Activated naive CD4-positive, alpha-beta T cell treated with anti-CD3 and anti-CD28 coated beads, Interleukin-2, amount 10 ng/mL, durations not matched to agents 7 days and 5 days (primary cell): ENCODE measurements at regions of chr11 and their contacts with region 1.

Region 1: DNA sequence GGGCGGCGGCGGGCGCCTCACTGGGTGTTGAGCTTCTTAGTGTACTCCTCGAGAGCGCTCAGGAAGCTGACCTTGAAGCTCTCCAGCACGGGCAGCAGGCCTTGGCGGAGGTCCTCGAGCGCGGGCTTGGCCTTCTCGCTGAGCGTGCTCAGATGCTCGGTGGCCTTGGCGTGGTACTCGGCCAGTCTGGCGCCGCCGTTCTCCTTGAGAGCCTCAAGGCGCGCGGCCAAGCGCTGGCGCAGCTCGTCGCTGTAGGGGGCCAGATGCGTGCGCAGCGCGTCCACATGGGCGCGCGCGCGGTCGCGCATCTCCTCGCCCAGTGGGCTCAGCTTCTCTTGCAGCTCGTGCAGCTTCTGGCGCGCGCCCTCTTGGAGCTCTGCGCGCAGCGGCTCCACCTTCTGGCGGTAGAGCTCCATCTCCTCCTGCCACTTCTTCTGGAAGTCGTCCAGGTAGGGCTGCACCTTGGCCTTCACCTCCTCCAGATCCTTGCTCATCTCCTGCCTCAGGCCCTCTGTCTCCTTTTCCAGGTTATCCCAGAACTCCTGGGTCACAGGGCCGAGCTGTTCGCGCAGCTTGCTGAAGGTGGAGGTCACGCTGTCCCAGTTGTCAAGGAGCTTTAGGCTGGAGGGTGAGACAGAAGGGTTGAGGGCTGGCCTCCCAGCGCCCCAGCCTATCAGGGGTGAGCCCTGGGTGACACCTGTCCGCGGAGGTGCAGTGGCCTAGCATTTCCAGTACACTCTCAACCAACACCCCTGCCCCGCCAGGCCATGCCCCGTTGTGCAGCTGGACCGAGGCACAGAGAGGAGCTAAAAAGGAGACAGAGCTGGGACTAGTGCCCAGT is 1.4 kb downstream of the APOA1 start:
- DNase-seq: peak; percentile 89
- H3K4me3 Mint-ChIP-seq: peak overlapping the region; percentile 67
- H3K27ac Mint-ChIP-seq: peak overlapping the region; percentile 74
- H3K4me1 Mint-ChIP-seq: peaks cover 20% of the 10 kb centered on the region
- H3K27me3 Mint-ChIP-seq: peaks cover 34% of the 10 kb centered on the region

Region 2: DNA sequence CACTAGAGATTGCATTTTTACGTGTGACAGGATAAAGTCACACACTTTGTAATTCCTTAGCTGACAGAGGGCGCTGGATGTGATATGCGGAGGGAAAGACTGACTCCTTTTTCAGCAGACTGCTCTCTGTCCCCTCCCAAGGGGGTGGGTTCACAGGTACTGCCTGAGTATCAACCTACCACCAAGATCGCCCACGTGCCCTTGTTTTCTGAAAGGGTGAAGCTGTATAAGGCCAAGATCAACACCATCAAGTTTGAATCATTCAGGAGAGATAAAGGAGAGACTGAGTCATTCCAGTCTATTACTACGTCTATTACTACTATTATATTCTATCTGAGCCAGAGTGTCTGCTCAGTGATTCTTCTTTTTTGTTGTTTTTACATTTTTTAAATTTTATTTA is 93.9 kb before region 1 on chr11:
- CTCF ChIA-PET with region 1: interaction called, 10 read pairs
- DNase-seq: no peak
- H3K4me3 Mint-ChIP-seq: no peak overlapping the region
- H3K27ac Mint-ChIP-seq: no peak overlapping the region
- H3K4me1 Mint-ChIP-seq: no peaks in the 10 kb centered on the region
- H3K27me3 Mint-ChIP-seq: no peaks in the 10 kb centered on the region

Region 3: GRCh38 chr11:116787786-116788486 is 48.1 kb before region 1 on chr11 and contains the start of gene ZPR1:
- CTCF ChIA-PET with region 1: interaction called, 139 read pairs
- DNase-seq: peak; percentile 92
- H3K4me3 Mint-ChIP-seq: peak within 1 kb of the TSS; percentile 94
- H3K27ac Mint-ChIP-seq: peak within 1 kb of the TSS; percentile 89
- H3K4me1 Mint-ChIP-seq: peaks cover 42% of the 10 kb centered on the region
- H3K27me3 Mint-ChIP-seq: peaks cover 39% of the 10 kb centered on the region

Region 4: GRCh38 chr11:116823031-116823843 is 12.8 kb before region 1 on chr11 and contains the start of gene APOA4:
- CTCF ChIA-PET with region 1: interaction called, 11 read pairs
- DNase-seq: no peak
- H3K4me3 Mint-ChIP-seq: no peak within 1 kb of the TSS
- H3K27ac Mint-ChIP-seq: no peak within 1 kb of the TSS
- H3K4me1 Mint-ChIP-seq: no peaks in the 10 kb centered on the region
- H3K27me3 Mint-ChIP-seq: no peaks in the 10 kb centered on the region

Region 5: GRCh38 chr11:117107701-117108590 is 271.9 kb after region 1 on chr11:
- CTCF ChIA-PET with region 1: interaction called, 35 read pairs
- DNase-seq: no peak
- H3K4me3 Mint-ChIP-seq: no peak overlapping the region
- H3K27ac Mint-ChIP-seq: no peak overlapping the region
- H3K4me1 Mint-ChIP-seq: peaks cover 4% of the 10 kb centered on the region
- H3K27me3 Mint-ChIP-seq: peaks cover 5% of the 10 kb centered on the region